ENCODE measurements at regions of chr6 and their contacts with region 1.

Region 1: DNA sequence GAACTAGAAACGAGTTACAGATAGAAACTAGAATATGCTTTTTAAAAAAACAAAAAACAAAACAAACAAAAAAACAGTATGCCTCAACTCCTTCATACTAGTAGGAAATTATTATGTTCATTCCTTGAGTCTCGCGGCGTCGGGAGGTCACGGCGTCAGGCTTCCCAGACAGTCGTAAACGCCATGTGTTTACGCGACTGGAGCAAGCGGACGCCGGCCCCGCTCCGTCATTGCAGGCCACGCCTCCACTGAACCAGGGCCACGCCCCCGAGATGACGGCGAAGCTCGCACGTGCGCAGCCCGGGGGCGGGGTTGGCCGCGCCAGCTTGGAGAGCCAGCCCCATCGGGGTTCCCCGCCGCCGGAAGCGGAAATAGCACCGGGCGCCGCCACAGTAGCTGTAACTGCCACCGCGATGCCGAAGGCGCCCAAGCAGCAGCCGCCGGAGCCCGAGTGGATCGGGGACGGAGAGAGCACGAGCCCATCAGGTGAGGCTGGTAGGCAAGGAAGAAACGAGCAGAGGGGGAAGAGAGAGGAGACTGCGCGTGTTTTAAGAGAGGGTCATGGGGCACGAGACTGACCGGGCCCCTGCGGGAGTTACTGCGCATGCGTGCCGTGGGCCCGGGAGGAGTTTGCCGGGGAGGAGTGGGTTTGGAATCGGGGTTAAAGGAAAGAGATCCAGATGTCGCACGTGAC is at the start of gene ABCF1:
- DNase-seq: peak; percentile 97 to 98 (median 98)
- H3K4me3 ChIP-seq: peak within 1 kb of the TSS; percentile 83 to 97 (median 95)
- H3K27ac ChIP-seq: peak within 1 kb of the TSS; percentile 92 to 95
- H3K4me1 ChIP-seq: peaks cover 11 to 36% (median 26%) of the 10 kb centered on the region in 4 experiments
- H3K27me3 ChIP-seq: no peaks in the 10 kb centered on the region

Region 2: DNA sequence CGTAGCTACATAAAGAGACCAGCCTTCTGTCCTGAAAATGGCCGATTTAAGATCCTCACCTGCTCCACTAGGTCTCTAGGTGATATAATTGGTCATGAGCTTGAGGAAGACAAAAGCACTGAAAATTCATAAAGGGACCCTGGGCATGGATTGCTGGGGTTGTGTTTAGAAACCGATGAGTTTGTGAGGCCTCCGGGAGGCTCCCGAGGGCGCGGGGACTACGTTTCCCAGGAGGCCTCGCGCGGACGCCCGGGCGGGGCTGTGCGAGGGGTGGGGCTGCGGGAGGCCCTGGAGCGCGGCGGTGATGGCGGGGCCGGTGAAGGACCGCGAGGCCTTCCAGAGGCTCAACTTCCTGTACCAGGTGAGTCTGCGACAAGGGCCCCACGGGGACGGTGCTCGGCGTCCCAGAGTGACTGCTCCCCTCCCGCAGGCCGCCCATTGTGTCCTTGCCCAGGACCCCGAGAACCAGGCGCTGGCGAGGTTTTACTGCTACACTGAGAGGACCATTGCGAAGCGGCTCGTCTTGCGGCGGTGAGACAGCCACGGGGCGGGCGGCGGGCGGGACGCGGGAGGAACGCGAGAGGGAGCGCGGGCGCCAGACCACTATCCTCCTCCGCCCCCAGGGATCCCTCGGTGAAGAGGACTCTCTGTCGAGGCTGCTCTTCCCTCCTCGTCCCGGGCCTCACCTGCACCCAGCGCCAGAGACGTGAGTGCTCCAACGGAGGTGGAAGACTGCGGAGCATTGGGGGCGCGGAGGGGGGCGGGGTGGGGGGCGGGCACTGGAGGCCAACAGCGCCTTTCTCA is 226.2 kb before region 1 on chr6 and contains the start of gene RPP21:
- CTCF ChIA-PET with region 1: no interaction called
- POLR2A ChIA-PET with region 1: no interaction called
- DNase-seq: peak; percentile 73 to 85 (median 75)
- H3K4me3 ChIP-seq: peak within 1 kb of the TSS; percentile 72 to 90 (median 78)
- H3K27ac ChIP-seq: peak within 1 kb of the TSS in 1 of 2 experiments; percentile 73
- H3K4me1 ChIP-seq: peaks cover 3 to 11% (median 4%) of the 10 kb centered on the region in 4 experiments
- H3K27me3 ChIP-seq: no peaks in the 10 kb centered on the region

Region 3: GRCh38 chr6:30556066-30556905 is 14.9 kb before region 1 on chr6 and contains the start of gene GNL1:
- CTCF ChIA-PET with region 1: interaction called, 10 read pairs
- POLR2A ChIA-PET with region 1: interaction called, 6 read pairs
- DNase-seq: peak; percentile 96 to 98 (median 97)
- H3K4me3 ChIP-seq: peak within 1 kb of the TSS; percentile 86 to 95 (median 89)
- H3K27ac ChIP-seq: peak within 1 kb of the TSS; percentile 88 to 93
- H3K4me1 ChIP-seq: peaks cover 8 to 30% (median 23%) of the 10 kb centered on the region in 4 experiments
- H3K27me3 ChIP-seq: no peaks in the 10 kb centered on the region

Region 4: DNA sequence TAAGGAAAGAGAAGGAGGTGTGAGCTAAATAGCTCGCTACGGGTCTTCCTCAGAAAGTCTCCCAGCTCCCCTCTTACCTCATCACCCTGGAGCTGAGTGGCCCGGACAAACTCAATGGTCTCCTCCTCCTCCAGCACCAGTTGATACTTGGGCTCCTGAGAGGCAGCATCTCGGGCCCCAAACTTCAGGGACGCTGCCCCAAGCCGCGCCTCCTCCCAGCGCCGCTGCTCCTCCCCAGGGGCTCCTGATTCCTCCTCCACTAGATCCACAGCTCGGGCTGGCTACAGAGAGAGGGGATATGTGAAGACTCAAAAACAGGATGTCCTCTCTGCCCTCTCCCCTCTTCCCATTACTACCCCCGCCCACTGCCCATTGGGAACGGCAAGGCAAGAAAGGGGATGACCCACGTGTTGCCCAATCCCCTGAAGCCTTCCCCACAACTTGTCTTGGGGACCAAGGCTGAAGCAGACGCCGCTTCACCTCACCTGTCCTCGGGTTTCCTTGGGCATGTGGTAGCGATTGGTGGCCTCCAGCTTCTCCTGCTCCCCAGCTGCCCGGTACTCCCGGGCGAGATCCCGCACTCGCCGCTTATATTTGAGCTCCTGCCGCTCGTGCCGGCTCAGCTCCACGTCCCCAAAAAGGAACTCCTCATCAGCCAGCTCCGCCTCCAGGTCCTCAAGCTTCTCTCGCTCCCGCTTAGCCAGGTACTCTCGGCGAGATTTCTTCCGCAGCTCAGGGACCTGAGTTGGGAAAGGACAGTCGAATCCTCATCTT is 94.0 kb after region 1 on chr6:
- CTCF ChIA-PET with region 1: no interaction called
- POLR2A ChIA-PET with region 1: no interaction called
- DNase-seq: no peak
- H3K4me3 ChIP-seq: no peak overlapping the region
- H3K27ac ChIP-seq: no peak overlapping the region
- H3K4me1 ChIP-seq: no peaks in the 10 kb centered on the region
- H3K27me3 ChIP-seq: no peaks in the 10 kb centered on the region